ENCODE measurements at regions of chrX and their contacts with region 1.

Region 1: DNA sequence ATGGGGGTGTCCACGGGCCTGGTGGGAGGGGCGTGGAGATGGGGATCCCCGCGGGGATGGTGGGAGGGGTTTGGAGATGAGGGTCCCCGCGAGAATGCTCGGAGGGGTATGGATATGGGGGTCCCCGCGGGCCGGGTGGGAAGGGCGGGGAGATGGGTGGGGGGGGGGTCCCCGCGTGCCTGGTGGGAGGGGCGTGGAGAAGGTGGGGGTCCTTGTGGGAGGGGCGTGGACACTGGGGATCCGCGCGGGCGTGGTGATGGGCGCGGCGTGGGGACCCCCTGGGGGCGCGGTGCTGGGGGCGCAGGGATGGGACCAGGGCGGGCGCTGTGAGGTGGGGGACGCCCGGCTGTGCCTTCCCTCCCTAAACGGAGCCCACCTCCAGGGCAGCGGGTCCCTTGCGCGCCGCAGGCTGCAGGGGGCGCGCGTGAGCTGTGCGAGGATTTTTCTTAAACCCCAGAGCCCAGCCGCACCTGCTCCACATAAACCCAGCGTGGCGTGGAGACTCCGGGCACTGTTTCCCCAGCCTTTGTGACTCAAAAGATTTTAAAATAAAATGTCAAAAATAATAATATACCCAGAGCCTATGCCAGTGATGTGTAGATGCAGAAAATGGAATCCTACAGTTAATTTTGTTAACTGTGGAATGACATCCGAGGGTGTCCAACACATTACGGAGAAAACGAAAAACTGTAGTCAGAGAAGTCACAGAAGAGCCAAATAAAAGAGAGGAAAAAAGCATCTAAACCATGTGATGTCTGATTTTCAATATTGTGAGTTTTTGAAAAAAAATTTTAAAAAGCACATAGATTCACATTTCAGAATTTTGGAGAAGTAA is 1.5 kb upstream of the ASMTL start:
- DNase-seq: peak; percentile 93
- ATAC-seq: peak; percentile 22
- H3K4me3 ChIP-seq: peak overlapping the region in 4 of 5 experiments; percentile 62 to 81 (median 74)
- H3K4me3 Mint-ChIP-seq: peak overlapping the region; percentile 80
- H3K27ac ChIP-seq: peak overlapping the region; percentile 91 to 96
- H3K27ac Mint-ChIP-seq: peak overlapping the region; percentile 77
- H3K4me1 ChIP-seq: peaks cover 20 to 56% of the 10 kb centered on the region in 2 donors
- H3K4me1 Mint-ChIP-seq: peaks cover 30% of the 10 kb centered on the region
- H3K27me3 ChIP-seq: no peaks in the 10 kb centered on the region
- H3K27me3 Mint-ChIP-seq: no peaks in the 10 kb centered on the region
- CTCF ChIP-seq: peak; percentile 97

Region 2: DNA sequence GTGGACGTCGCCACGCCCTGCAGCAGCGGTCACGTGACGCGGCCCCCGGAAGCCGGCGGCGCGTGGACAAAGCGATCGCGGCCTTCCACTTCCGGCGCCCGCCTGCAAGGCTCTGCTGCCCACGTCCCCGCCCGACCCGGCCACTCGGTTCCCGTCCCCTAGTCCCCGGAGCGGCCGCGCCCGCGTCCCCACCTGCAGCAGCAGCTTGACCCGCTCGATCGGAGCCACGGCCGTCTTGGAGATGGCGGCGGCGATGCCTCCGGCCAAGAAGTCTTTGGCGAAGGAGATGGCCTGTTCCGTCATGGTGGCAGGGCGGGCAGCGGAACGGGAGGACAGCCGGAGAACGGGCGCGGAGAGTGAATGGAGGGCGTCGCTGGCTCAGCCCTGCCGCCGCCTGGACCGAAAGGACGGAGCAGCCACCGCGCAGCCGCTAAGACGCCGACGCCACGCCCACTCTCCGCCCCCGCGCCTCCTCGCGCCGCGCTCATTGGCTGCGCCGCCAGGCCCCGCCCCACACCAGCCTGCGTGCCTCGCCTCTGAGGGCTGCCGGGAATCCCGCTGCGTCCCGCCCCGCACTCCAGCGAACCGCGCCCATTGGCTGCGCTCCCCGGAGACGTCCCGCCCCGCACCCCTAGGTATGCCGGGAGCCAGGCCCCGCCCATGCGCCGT is 62.3 kb before region 1 on chrX and contains the start of gene SLC25A6:
- CTCF ChIA-PET with region 1: no interaction called
- POLR2A ChIA-PET with region 1: no interaction called
- intact Hi-C with region 1: loop called (anchors 1 kb)
- DNase-seq: peak; percentile 99
- ATAC-seq: peak; percentile 95
- H3K4me3 ChIP-seq: peak within 1 kb of the TSS; percentile 60 to 100 (median 99)
- H3K4me3 Mint-ChIP-seq: peak within 1 kb of the TSS; percentile 92
- H3K27ac ChIP-seq: peak within 1 kb of the TSS; percentile 96 to 98
- H3K27ac Mint-ChIP-seq: peak within 1 kb of the TSS; percentile 96
- H3K4me1 ChIP-seq: peaks cover 17 to 22% of the 10 kb centered on the region in 2 donors
- H3K4me1 Mint-ChIP-seq: peaks cover 38% of the 10 kb centered on the region
- H3K27me3 ChIP-seq: no peaks in the 10 kb centered on the region
- H3K27me3 Mint-ChIP-seq: no peaks in the 10 kb centered on the region
- CTCF ChIP-seq: no peak
- total RNA-seq, gene SLC25A6: 323 and 343 TPM in 2 replicates

Region 3: GRCh38 chrX:1403241-1403640 is 50.9 kb before region 1 on chrX:
- CTCF ChIA-PET with region 1: no interaction called
- POLR2A ChIA-PET with region 1: no interaction called
- intact Hi-C with region 1: no loop called
- DNase-seq: no peak
- ATAC-seq: no peak
- H3K4me3 ChIP-seq: no peak overlapping the region
- H3K4me3 Mint-ChIP-seq: no peak overlapping the region
- H3K27ac ChIP-seq: no peak overlapping the region
- H3K27ac Mint-ChIP-seq: no peak overlapping the region
- H3K4me1 ChIP-seq: no peaks in the 10 kb centered on the region
- H3K4me1 Mint-ChIP-seq: no peaks in the 10 kb centered on the region
- H3K27me3 ChIP-seq: no peaks in the 10 kb centered on the region
- H3K27me3 Mint-ChIP-seq: no peaks in the 10 kb centered on the region
- CTCF ChIP-seq: no peak

Region 4: DNA sequence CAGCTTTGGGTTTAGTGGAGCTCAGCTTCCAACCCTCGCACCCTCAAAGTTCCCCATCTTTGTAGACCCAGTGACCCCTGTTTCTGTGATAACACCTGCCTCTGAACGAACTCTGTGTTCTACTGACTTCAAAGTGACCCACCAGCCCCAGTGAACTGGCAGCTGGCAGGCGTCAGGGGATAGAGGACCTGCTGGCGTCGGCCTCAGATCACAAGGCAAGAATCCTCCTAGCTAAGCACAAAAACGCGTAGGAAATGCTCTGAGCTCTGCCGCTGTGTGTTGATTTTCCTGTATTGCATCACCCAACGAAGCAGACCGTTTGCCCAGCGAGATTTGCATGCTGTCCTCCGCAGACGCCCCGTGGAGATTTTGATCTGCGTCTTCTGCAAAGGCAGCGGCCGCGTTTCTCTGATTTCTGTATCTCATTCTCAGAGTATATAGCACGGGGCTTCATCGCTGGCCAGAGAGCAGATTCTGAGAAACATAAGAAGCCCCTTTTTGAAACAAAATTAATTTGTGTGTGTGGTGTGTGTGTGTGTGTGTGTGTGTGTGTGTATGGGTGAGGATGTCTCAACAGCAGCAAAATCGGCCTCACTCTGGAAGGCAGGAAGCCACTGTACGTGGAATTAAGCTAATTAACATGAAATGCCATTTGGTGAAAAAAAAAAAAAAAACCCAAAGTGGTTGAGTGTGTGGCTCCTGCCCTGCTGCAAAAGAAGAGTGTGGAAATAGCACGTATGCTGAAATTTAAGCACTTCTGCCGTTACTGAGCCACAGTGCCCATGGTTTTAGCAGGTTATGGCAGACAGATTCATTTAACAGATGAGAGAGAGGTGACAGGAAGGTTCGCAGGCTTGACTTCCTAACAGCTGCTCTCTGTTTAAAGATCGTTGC is 27.7 kb after region 1 on chrX:
- CTCF ChIA-PET with region 1: no interaction called
- POLR2A ChIA-PET with region 1: no interaction called
- intact Hi-C with region 1: loop called (anchors 1 kb)
- DNase-seq: peak; percentile 88
- ATAC-seq: peak; percentile 75
- H3K4me3 ChIP-seq: peak overlapping the region in 4 of 5 experiments; percentile 19 to 45 (median 26)
- H3K4me3 Mint-ChIP-seq: peak overlapping the region; percentile 80
- H3K27ac ChIP-seq: peak overlapping the region; percentile 68 to 89
- H3K27ac Mint-ChIP-seq: peak overlapping the region; percentile 98
- H3K4me1 ChIP-seq: peaks cover 44 to 72% of the 10 kb centered on the region in 2 donors
- H3K4me1 Mint-ChIP-seq: peaks cover 74% of the 10 kb centered on the region
- H3K27me3 ChIP-seq: no peaks in the 10 kb centered on the region
- H3K27me3 Mint-ChIP-seq: no peaks in the 10 kb centered on the region
- CTCF ChIP-seq: no peak

Region 5: DNA sequence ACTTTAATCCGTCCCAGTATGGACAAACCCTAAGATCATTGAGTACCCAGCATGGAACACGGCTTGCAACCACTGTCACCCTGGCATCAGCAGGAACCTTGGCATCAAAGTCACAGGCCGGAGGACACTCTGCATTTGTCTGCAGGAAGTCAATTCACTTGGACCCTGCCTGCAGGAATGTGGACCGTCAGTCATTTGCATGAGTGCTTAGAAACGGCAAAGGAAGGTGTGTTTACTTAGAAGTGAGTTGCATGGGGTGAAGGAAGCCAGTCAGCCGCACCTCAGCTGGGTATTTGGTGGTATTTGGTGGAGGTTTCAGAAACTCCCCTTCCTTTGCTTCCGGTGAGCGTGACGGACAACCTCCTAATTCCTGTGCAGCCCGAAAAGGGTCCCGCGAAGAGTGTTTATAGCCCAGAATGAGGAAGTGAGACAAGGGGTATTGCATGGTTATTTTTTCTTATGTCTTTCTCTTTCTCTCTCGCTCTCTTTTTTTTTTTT is 67.3 kb after region 1 on chrX:
- CTCF ChIA-PET with region 1: no interaction called
- POLR2A ChIA-PET with region 1: no interaction called
- intact Hi-C with region 1: loop called (anchors 1 kb)
- DNase-seq: peak; percentile 97
- ATAC-seq: peak; percentile 91
- H3K4me3 ChIP-seq: peak overlapping the region in 4 of 5 experiments; percentile 21 to 64 (median 27)
- H3K4me3 Mint-ChIP-seq: peak overlapping the region; percentile 85
- H3K27ac ChIP-seq: peak overlapping the region; percentile 90 to 98
- H3K27ac Mint-ChIP-seq: peak overlapping the region; percentile 97
- H3K4me1 ChIP-seq: peaks cover 56 to 69% of the 10 kb centered on the region in 2 donors
- H3K4me1 Mint-ChIP-seq: peaks cover 54% of the 10 kb centered on the region
- H3K27me3 ChIP-seq: no peaks in the 10 kb centered on the region
- H3K27me3 Mint-ChIP-seq: no peaks in the 10 kb centered on the region
- CTCF ChIP-seq: no peak

Region 6: GRCh38 chrX:1580735-1581531 is 126.8 kb after region 1 on chrX:
- CTCF ChIA-PET with region 1: no interaction called
- POLR2A ChIA-PET with region 1: no interaction called
- intact Hi-C with region 1: loop called (anchors 1 kb)
- DNase-seq: peak; percentile 77
- ATAC-seq: peak; percentile 78
- H3K4me3 ChIP-seq: no peak overlapping the region
- H3K4me3 Mint-ChIP-seq: no peak overlapping the region
- H3K27ac ChIP-seq: no peak overlapping the region
- H3K27ac Mint-ChIP-seq: peak overlapping the region; percentile 37
- H3K4me1 ChIP-seq: peaks cover 8 to 20% of the 10 kb centered on the region in 2 donors
- H3K4me1 Mint-ChIP-seq: peaks cover 25% of the 10 kb centered on the region
- H3K27me3 ChIP-seq: no peaks in the 10 kb centered on the region
- H3K27me3 Mint-ChIP-seq: no peaks in the 10 kb centered on the region
- CTCF ChIP-seq: peak; percentile 82

Region 7: DNA sequence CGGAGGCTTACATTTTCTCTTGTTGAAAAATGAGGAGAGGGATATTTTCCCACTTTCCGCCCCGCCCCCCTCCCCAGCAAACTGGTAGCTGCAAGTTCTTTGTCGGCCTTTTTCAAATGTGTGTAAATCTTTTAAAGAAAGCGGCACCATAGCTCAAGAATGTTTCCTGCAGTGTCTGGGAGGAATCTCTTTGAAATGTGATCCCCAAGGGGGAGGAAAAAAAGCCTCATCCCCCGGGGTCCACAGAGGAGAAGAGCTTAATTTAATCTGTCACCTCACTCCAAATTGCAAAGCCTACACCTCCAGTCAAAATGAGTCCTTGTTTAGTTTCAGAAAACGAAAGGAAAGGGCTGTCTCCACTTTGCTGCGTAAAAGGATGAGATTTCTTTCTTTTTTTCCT is 195.5 kb after region 1 on chrX:
- CTCF ChIA-PET with region 1: no interaction called
- POLR2A ChIA-PET with region 1: no interaction called
- intact Hi-C with region 1: loop called (anchors 1 kb)
- DNase-seq: no peak
- ATAC-seq: no peak
- H3K4me3 ChIP-seq: no peak overlapping the region
- H3K4me3 Mint-ChIP-seq: no peak overlapping the region
- H3K27ac ChIP-seq: no peak overlapping the region
- H3K27ac Mint-ChIP-seq: no peak overlapping the region
- H3K4me1 ChIP-seq: peaks cover 0 to 7% of the 10 kb centered on the region in 2 donors
- H3K4me1 Mint-ChIP-seq: peaks cover 10% of the 10 kb centered on the region
- H3K27me3 ChIP-seq: peaks cover 0 to 13% (median 2%) of the 10 kb centered on the region in 4 experiments
- H3K27me3 Mint-ChIP-seq: peaks cover 8% of the 10 kb centered on the region
- CTCF ChIP-seq: no peak

Region 8: DNA sequence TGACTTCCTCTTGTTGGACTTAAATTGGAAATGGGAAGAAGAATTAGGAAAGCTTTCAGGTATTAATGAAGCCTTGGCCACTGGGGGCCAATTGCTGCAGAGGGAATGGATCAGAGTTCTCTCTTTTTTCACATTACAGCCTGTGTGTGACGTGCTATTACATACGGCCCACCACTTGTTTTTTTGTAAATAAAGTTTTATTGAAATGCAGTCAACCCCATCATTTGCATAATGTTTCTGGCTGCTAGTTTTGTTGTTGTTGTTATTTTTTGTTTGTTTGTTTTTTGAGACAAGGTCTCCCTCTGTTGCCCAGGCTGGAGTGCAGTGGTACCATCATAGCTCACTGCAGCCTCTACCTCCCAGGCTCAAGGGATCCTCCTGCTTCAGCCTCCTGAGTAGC is 259.1 kb after region 1 on chrX:
- CTCF ChIA-PET with region 1: no interaction called
- POLR2A ChIA-PET with region 1: no interaction called
- intact Hi-C with region 1: no loop called
- DNase-seq: no peak
- ATAC-seq: no peak
- H3K4me3 ChIP-seq: no peak overlapping the region
- H3K4me3 Mint-ChIP-seq: no peak overlapping the region
- H3K27ac ChIP-seq: no peak overlapping the region
- H3K27ac Mint-ChIP-seq: no peak overlapping the region
- H3K4me1 ChIP-seq: no peaks in the 10 kb centered on the region
- H3K4me1 Mint-ChIP-seq: no peaks in the 10 kb centered on the region
- H3K27me3 ChIP-seq: no peaks in the 10 kb centered on the region
- H3K27me3 Mint-ChIP-seq: no peaks in the 10 kb centered on the region
- CTCF ChIP-seq: no peak

Region 9: GRCh38 chrX:2176733-2177132 is 722.6 kb after region 1 on chrX:
- CTCF ChIA-PET with region 1: no interaction called
- POLR2A ChIA-PET with region 1: no interaction called
- intact Hi-C with region 1: loop called (anchors 2 kb)
- DNase-seq: no peak
- ATAC-seq: no peak
- H3K4me3 ChIP-seq: no peak overlapping the region
- H3K4me3 Mint-ChIP-seq: no peak overlapping the region
- H3K27ac ChIP-seq: no peak overlapping the region
- H3K27ac Mint-ChIP-seq: no peak overlapping the region
- H3K4me1 ChIP-seq: peaks cover 0 to 16% of the 10 kb centered on the region in 2 donors
- H3K4me1 Mint-ChIP-seq: peaks cover 17% of the 10 kb centered on the region
- H3K27me3 ChIP-seq: no peaks in the 10 kb centered on the region
- H3K27me3 Mint-ChIP-seq: no peaks in the 10 kb centered on the region
- CTCF ChIP-seq: no peak

Measured in B cell (primary cell).